CD8-positive, alpha-beta memory T cell (primary cell): ENCODE measurements at regions of chr3 and their contacts with region 1.

Region 1: GRCh38 chr3:58568572-58569286 is 8.5 kb downstream of the FAM107A start:
- DNase-seq: peak; percentile 28 to 67 (median 53)
- H3K4me3 ChIP-seq: no peak overlapping the region
- H3K4me3 Mint-ChIP-seq: peak overlapping the region in 6 of 7 donors; percentile 13 to 88 (median 44)
- H3K27ac ChIP-seq: no peak overlapping the region
- H3K27ac Mint-ChIP-seq: peak overlapping the region in 2 of 8 donors; percentile 7 to 84
- H3K4me1 ChIP-seq: no peaks in the 10 kb centered on the region
- H3K4me1 Mint-ChIP-seq: peaks cover 6 to 7% (median 7%) of the 10 kb centered on the region in 3 donors
- H3K27me3 ChIP-seq: no peaks in the 10 kb centered on the region
- H3K27me3 Mint-ChIP-seq: peaks cover 9 to 20% of the 10 kb centered on the region in 2 donors

Region 2: DNA sequence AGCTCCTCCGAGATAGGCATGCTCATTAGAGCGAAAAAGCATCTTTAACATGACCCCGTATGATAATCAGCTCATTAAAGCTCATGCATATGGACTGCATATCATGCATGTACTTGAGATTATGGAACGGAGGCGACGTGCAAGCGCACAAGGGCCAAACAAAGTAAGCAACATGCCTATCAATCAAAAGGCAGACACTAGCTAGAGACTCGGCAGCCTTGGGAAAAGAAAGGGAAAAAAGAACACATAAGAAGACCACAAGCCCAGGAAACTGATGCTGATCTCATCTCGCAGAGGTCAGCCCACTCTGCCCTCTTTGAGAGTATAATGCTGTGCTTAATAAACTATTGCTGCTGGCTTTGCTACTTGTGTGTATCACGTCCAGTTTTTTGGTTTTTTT is 29.1 kb before region 1 on chr3:
- CTCF ChIA-PET with region 1: no interaction called
- POLR2A ChIA-PET with region 1: no interaction called
- DNase-seq: no peak
- H3K4me3 ChIP-seq: no peak overlapping the region
- H3K4me3 Mint-ChIP-seq: no peak overlapping the region
- H3K27ac ChIP-seq: no peak overlapping the region
- H3K27ac Mint-ChIP-seq: no peak overlapping the region
- H3K4me1 ChIP-seq: no peaks in the 10 kb centered on the region
- H3K4me1 Mint-ChIP-seq: no peaks in the 10 kb centered on the region
- H3K27me3 ChIP-seq: no peaks in the 10 kb centered on the region
- H3K27me3 Mint-ChIP-seq: peaks cover 0 to 4% of the 10 kb centered on the region in 2 donors

Region 3: GRCh38 chr3:58556761-58557221 is 11.9 kb before region 1 on chr3:
- CTCF ChIA-PET with region 1: interaction called, 15 read pairs
- POLR2A ChIA-PET with region 1: no interaction called
- DNase-seq: no peak
- H3K4me3 ChIP-seq: no peak overlapping the region
- H3K4me3 Mint-ChIP-seq: no peak overlapping the region
- H3K27ac ChIP-seq: no peak overlapping the region
- H3K27ac Mint-ChIP-seq: peak overlapping the region in 1 of 8 donors; percentile 42
- H3K4me1 ChIP-seq: no peaks in the 10 kb centered on the region
- H3K4me1 Mint-ChIP-seq: no peaks in the 10 kb centered on the region
- H3K27me3 ChIP-seq: no peaks in the 10 kb centered on the region
- H3K27me3 Mint-ChIP-seq: peaks cover 2 to 5% of the 10 kb centered on the region in 2 donors

Region 4: GRCh38 chr3:58585005-58585786 is 16.5 kb after region 1 on chr3:
- CTCF ChIA-PET with region 1: interaction called, 10 read pairs
- POLR2A ChIA-PET with region 1: no interaction called
- DNase-seq: peak in 4 of 5 donors; percentile 13 to 54 (median 23)
- H3K4me3 ChIP-seq: peak overlapping the region; percentile 74
- H3K4me3 Mint-ChIP-seq: peak overlapping the region; percentile 90 to 96 (median 94)
- H3K27ac ChIP-seq: no peak overlapping the region
- H3K27ac Mint-ChIP-seq: peak overlapping the region in 5 of 8 donors; percentile 13 to 68 (median 36)
- H3K4me1 ChIP-seq: no peaks in the 10 kb centered on the region
- H3K4me1 Mint-ChIP-seq: peaks cover 18 to 24% (median 22%) of the 10 kb centered on the region in 3 donors
- H3K27me3 ChIP-seq: peaks cover 18% of the 10 kb centered on the region
- H3K27me3 Mint-ChIP-seq: peaks cover 49 to 53% of the 10 kb centered on the region in 2 donors